ENCODE measurements at regions of chr4 and their contacts with region 1.

Region 1: DNA sequence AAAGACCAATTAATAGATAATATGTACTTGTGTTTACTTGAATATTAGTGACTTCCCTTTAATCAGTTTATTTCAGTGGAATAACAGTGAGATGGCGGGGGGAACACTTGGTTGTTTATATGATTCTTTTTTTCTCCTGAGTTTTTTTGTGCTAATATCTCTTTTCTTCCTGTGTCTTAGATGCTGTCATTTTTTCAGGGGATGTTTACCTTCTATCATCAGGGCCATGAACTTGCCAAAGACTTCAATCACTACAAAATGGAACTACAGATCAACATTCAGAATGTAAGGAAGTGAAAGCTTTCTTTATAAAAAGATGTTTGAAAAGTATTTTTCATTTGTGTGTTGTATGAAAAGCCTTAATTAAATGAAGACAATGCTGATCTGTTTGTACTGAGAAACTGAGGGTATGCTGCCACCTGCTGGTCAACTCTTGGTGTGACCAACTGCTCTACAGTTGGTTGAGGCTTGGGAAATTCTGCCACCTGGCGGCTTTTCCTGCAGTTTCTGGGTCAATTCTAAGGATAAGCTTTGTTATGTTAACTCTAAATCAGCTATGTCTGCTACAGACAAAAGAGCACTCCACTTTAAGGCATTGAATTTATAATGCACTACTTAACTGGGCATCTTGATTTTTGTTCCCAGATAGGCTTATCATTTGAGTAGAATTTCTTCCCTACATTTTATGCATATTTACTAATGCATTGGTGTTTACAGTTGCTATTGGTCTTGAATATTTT is 134.8 kb downstream of the ARHGAP10 start:
- DNase-seq: peak; percentile 79
- H3K4me3 Mint-ChIP-seq: no peak overlapping the region
- H3K27ac Mint-ChIP-seq: no peak overlapping the region
- H3K4me1 Mint-ChIP-seq: peaks cover 8% of the 10 kb centered on the region
- H3K27me3 Mint-ChIP-seq: no peaks in the 10 kb centered on the region

Region 2: GRCh38 chr4:147160908-147161513 is 705.7 kb before region 1 on chr4:
- intact Hi-C with region 1: loop called (anchors 2 kb)
- DNase-seq: no peak
- H3K4me3 Mint-ChIP-seq: no peak overlapping the region
- H3K27ac Mint-ChIP-seq: no peak overlapping the region
- H3K4me1 Mint-ChIP-seq: no peaks in the 10 kb centered on the region
- H3K27me3 Mint-ChIP-seq: peaks cover 20% of the 10 kb centered on the region

Region 3: GRCh38 chr4:147596981-147597380 is 269.7 kb before region 1 on chr4:
- intact Hi-C with region 1: loop called (anchors 2 kb)
- DNase-seq: no peak
- H3K4me3 Mint-ChIP-seq: no peak overlapping the region
- H3K27ac Mint-ChIP-seq: no peak overlapping the region
- H3K4me1 Mint-ChIP-seq: no peaks in the 10 kb centered on the region
- H3K27me3 Mint-ChIP-seq: peaks cover 11% of the 10 kb centered on the region

Region 4: DNA sequence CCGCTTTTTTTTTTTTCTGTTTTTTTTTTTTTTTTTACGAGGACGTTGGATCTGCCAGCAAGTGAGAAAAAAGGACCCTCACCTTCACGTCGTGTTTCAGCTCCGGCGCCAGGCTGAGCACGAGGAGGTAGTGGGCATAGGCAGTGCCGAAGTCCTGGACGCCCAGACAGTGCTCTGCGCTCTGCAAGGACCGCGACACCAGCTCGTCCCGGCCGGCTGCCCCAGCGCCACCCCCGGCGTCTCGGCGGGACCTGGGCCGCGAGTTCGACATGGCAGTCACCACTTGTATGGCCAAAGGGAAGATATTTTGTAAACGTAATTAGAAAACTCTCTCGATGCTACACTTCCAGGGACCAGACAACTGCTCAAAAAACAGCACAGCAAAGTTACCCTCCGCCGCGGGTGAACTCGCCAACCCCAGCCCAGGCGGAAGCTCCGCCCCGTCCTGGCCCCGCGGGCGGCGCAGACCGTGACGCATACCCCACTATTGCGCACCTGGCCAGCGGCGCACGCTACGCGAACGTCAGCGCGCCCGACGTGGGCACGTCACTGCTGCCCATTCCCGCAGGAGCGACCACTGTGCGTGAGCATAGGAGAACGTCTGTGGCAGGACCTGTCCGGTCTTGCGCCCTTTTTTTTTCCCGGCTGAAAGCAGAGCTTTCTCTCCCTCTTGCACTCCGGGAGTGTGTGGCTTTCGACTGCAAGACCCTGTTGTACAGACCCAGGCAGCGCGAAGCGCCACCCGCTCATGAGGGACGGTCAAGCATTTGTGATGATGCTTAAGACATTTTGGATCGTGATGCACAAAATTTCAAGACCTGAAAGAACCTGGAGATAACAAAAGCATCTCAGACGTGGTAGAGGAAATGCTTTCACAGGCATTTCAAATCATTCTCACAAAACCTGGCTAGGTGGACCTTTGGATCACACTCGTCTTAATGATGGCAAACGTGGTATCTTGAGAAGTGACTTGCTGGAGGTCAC is 182.7 kb before region 1 on chr4 and contains the start of gene PRMT9:
- intact Hi-C with region 1: loop called (anchors 1 kb)
- DNase-seq: peak; percentile 85
- H3K4me3 Mint-ChIP-seq: peak within 1 kb of the TSS; percentile 92
- H3K27ac Mint-ChIP-seq: peak within 1 kb of the TSS; percentile 92
- H3K4me1 Mint-ChIP-seq: peaks cover 30% of the 10 kb centered on the region
- H3K27me3 Mint-ChIP-seq: peaks cover 9% of the 10 kb centered on the region
- total RNA-seq, gene PRMT9: 6.8 and 7.4 TPM in 2 replicates

Region 5: GRCh38 chr4:147793569-147794313 is 73.0 kb before region 1 on chr4:
- intact Hi-C with region 1: loop called (anchors 5 kb)
- DNase-seq: no peak
- H3K4me3 Mint-ChIP-seq: peak overlapping the region; percentile 61
- H3K27ac Mint-ChIP-seq: peak overlapping the region; percentile 80
- H3K4me1 Mint-ChIP-seq: peaks cover 58% of the 10 kb centered on the region
- H3K27me3 Mint-ChIP-seq: peaks cover 2% of the 10 kb centered on the region

Region 6: GRCh38 chr4:147831551-147832177 is 35.0 kb before region 1 on chr4:
- intact Hi-C with region 1: no loop called
- DNase-seq: no peak
- H3K4me3 Mint-ChIP-seq: no peak overlapping the region
- H3K27ac Mint-ChIP-seq: no peak overlapping the region
- H3K4me1 Mint-ChIP-seq: peaks cover 11% of the 10 kb centered on the region
- H3K27me3 Mint-ChIP-seq: peaks cover 1% of the 10 kb centered on the region